ENCODE measurements at regions of chr9 and their contacts with region 1.

Region 1: GRCh38 chr9:127734747-127735529 is at the start of gene TOR2A:
- DNase-seq: peak; percentile 95 to 100
- H3K4me3 ChIP-seq: peak within 1 kb of the TSS; percentile 55
- CTCF ChIP-seq: peak in 2 of 3 donors; percentile 67 to 98
- POLR2A ChIP-seq: no peak
- total RNA-seq, gene TOR2A: 11.5 to 19.9 (median 15.1) TPM

Region 2: DNA sequence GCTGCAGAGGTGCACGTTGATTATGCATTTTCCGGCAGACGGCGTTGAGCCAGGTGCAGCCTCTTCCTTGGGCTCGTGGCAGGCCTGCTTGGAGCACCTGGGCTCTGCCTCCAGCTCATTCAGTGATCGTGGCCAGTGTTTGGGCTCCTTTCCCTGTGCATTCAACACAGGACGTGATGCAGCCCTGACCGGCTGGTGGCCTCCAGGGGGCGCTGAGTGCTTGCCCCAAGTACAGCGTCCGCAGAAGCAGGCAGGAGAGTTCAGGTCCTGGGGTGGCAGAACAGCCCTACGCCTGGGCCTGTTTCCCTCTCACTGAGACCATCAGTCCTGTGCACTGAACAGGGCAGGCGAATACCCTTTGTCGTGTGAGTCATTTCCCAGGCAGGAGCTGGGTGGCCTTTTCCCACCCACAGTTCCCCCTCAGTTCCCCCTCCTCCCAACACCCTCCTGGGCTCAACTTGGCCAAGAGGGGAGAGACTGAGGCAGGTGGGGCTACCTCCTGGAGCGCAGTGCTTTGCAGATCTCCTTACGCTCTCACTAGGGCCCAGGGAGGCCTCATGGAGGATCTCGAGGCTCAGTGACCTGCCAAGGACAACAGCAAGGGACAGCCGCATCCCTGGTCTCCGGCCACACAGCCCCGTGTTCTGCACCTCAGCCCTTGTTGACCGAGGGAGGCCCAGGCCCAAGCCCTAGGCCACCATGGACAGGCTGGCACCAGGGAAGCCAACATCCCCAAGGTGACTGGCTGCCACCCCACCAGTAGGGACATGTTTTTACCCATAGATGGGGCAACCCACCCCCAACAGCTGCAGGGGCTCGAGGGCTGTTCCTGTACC is 230.8 kb before region 1 on chr9:
- intact Hi-C with region 1: loop called (anchors 5 kb)
- DNase-seq: peak; percentile 80 to 96
- H3K4me3 ChIP-seq: no peak overlapping the region
- CTCF ChIP-seq: peak in 1 of 3 donors; percentile 82
- POLR2A ChIP-seq: no peak

Region 3: GRCh38 chr9:127586537-127586936 is 148.4 kb before region 1 on chr9:
- intact Hi-C with region 1: loop called (anchors 2 kb)
- DNase-seq: peak; percentile 85 to 95
- H3K4me3 ChIP-seq: no peak overlapping the region
- CTCF ChIP-seq: peak in 1 of 3 donors; percentile 59
- POLR2A ChIP-seq: no peak

Region 4: DNA sequence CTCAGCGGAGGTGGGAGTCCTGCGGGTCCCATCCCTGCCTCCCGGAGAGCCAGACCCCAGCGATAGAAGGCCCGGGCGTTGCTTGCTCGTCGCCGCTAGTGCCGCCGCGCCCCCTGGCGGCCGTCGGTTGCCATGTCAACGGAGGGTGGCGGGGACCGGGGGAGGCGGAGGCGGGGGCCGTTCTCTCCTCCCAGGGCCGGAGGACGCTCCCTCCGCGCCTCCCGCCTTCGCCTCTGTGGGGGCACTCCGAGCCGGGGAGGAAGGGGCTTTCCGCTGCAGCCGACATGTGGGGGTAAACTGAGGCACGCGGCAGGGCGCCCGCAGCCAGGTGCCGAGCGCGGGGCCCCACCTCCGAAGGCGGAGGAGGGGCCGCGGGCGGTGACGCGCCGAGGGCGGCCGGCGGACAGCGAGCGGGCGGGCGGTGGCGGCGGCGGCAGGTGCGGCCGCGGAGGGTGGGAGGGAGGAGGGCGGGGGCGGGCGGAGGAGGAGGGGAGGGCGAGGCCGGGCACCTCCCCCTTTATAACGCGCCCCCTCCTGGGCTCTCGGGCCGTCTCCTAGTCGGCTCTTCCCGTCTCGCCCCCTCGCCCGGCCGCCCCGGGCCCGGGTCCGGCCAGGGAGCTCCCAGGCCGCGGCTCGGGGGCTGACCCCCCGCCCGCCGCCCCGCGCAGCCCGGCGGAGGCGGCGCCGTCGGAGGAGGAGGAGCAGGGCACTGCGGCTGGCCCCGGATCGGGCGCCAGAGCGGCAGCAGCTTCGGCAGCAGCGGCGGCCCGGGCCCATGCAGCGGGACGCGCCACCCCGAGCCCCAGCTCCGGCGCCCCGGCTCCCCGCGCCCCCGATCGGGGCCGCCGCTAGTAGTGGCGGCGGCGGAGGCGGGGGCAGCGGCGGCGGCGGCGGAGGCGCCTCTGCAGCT is 50.3 kb after region 1 on chr9:
- intact Hi-C with region 1: loop called (anchors 5 kb)
- DNase-seq: peak; percentile 86 to 98
- H3K4me3 ChIP-seq: peak overlapping the region; percentile 78
- CTCF ChIP-seq: peak in 1 of 3 donors; percentile 70
- POLR2A ChIP-seq: no peak

Region 5: DNA sequence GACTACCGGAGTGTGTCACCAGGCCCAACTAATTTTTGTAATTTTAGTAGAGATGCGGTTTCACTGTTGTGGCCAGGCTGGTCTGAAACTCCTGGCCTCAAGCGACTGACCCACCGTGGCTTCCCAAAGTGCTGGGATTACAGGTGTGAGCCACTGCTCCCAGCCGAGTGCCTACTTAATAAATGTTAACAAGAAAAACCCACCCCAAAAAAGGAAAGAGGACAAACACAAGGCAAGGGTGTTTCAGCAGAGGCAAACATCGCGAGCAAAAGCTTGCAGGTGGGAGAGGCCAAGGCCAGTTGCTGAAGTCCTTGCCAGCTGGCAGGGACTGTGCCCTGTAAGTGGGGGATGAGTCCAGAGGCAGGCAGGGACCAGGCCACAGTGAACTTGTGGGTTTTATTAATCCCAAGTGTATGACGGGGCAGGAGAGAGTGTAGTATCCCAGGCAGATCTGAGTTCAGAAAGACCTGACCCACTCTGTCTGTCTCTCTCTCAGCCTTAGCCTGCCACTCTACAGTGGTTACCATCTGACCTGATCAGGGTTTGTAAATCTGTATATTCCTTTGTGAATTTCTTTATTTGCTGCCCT is 61.4 kb after region 1 on chr9:
- intact Hi-C with region 1: no loop called
- DNase-seq: no peak
- H3K4me3 ChIP-seq: no peak overlapping the region
- CTCF ChIP-seq: no peak
- POLR2A ChIP-seq: no peak

Region 6: DNA sequence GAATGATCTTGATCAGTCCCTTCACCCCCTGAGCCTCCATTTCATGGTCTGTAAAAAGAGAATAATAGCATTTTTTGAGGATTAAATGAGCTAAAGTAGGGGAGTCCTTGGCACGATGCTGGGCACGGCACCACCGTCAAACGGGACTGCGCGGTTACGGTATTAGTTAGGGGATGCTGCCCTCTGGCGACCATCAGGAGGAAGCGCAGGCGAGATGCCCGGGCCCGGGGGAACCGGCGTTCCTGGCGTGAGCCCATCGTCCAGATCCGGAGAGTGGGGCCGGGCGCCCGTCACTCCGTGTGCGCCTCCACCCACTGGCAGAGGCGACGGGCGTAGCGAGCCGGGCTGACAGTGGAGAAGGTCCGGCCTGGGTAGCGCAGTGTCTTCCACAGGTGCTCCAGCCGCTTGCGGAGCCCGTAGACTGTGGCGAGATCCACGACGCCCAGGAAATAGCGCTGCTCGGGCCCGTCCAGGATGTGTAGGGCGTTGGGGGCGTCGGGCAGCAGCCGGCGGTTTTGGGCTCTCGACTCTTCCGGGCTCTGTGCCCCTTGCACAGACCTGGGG is 186.7 kb after region 1 on chr9:
- intact Hi-C with region 1: loop called (anchors 5 kb)
- DNase-seq: peak in 1 of 2 donors; percentile 96
- H3K4me3 ChIP-seq: no peak overlapping the region
- CTCF ChIP-seq: peak in 1 of 3 donors; percentile 90
- POLR2A ChIP-seq: no peak